Cardiac septum (tissue), 1 donor: ENCODE measurements at regions of chr3 and their contacts with region 1.

Region 1: DNA sequence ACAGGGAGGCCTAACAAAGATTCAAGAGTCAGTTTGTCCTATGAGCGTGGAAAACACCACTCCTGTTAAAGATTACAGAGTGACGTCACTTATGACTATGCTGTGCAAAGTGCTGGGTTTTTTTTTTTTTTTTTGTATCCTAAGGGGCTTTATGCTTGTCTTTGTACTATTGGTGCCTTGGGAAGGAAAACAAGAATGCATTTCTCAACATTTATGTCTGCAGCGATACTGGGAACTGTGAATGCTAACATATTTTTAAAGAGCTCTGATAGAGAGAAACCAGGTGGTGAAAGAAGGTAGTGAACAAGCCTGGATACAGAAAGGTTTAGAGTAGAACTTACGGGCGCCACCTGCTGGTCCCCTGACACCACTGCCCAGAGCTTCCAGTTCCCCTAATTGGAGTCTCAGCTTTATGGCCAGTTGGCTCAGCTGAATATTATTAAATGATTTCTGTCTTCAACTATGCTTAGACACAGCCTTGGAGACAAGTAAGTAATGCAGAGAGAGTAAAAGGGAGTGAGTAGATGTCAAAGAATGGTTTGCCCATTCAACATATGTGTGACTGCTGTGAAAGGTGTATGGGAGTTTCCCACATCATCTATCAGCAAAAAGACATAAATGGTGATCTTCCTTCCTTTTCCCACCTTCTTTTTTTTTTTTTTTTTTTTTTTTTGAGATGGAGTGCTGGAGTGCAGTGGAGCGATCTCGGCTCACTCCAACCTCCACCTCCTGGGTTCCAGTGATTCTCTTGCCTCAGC is 807.9 kb upstream of the CFAP20DC start:
- DNase-seq: peak; percentile 80

Region 2: GRCh38 chr3:59212128-59212779 is 645.5 kb before region 1 on chr3:
- intact Hi-C with region 1: loop called (anchors 5 kb)
- DNase-seq: no peak

Region 3: DNA sequence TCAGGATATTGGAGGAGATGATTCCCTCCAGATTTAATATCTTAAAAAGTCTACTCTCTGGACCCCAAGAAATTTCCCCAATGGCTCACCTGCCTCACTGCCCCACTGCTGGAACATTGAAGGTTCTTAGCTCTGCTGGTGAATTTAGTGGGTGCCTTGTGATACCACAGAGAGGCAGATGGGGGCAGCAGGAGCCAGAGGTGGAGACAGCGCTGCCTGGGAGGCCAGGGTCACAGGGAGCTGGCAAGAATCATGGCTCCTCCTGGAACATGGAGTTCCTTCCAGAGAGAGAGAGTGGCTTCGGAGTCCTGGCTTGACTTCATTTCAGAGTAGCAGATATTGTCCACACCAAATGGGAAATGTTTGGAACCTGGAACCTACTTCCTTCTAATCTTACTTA is 544.4 kb before region 1 on chr3:
- intact Hi-C with region 1: loop called (anchors 5 kb)
- DNase-seq: no peak